Caco-2 (cell line): ENCODE measurements at regions of chr16 and their contacts with region 1.

Region 1: DNA sequence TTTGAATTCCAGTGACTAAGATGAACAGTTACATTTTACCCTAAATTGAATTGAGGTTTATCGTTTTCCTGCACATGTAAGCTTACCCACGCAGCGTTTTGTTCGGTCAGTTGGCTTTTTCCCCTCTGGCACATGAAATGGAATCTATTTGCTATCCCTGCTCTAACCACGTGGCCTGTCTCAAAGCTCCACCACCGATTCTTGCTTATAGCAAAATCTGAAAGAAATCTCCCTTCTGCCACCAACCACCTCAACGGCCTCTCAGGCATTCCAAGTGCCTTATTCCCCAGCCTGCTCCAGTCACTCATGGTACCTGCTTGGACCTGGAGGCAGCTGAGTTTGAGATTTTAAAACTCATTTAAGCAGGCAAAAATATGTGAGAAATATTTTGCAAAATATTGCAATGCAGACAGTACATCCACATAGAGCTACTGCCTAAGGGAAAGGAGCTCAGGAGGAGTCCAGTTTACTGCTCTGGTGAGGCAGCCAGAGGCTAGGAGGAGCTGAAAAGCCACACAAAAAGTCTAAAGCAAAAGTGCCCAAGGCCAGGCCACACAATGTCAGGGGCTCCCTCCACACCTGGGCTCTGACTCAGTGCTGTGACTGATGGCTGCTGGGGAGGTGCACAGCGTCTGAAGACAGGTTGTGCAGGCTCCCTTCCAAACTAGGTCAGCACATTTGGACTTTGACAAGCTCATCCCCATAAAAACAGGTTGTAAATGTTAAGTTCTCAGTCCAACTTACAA is 26.4 kb downstream of the ARHGAP17 start:
- DNase-seq: peak; percentile 87 to 91
- H3K4me3 ChIP-seq: no peak overlapping the region
- H3K4me3 Mint-ChIP-seq: peak overlapping the region; percentile 49
- H3K27ac Mint-ChIP-seq: peak overlapping the region; percentile 86
- H3K4me1 ChIP-seq: peaks cover 67% of the 10 kb centered on the region
- H3K4me1 Mint-ChIP-seq: peaks cover 51% of the 10 kb centered on the region
- H3K27me3 ChIP-seq: no peaks in the 10 kb centered on the region
- H3K27me3 Mint-ChIP-seq: no peaks in the 10 kb centered on the region
- CTCF ChIP-seq: no peak

Region 2: DNA sequence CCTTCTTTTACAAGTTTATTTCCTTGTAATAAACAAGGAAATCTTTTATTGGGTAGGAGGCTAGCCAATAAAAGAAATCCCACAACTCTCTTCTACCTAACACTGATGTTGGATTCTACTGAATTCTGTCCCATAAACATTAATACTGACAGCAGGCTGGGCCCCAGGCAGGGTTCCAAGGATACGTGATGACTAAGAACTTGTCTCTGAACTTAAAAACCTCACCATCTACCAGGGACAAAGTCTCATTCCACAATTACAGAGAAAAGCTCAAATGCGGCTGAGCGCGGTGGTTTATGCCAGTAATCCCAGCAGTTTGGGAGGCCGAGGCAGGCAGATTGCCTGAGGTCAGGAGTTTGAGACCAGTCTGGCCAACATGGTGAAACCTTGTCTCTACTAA is 38.5 kb before region 1 on chr16:
- CTCF ChIA-PET with region 1: no interaction called
- POLR2A ChIA-PET with region 1: no interaction called
- intact Hi-C with region 1: no loop called
- DNase-seq: no peak
- H3K4me3 ChIP-seq: no peak overlapping the region
- H3K4me3 Mint-ChIP-seq: no peak overlapping the region
- H3K27ac Mint-ChIP-seq: peak overlapping the region; percentile 8
- H3K4me1 ChIP-seq: peaks cover 12% of the 10 kb centered on the region
- H3K4me1 Mint-ChIP-seq: peaks cover 14% of the 10 kb centered on the region
- H3K27me3 ChIP-seq: no peaks in the 10 kb centered on the region
- H3K27me3 Mint-ChIP-seq: no peaks in the 10 kb centered on the region
- CTCF ChIP-seq: no peak

Region 3: DNA sequence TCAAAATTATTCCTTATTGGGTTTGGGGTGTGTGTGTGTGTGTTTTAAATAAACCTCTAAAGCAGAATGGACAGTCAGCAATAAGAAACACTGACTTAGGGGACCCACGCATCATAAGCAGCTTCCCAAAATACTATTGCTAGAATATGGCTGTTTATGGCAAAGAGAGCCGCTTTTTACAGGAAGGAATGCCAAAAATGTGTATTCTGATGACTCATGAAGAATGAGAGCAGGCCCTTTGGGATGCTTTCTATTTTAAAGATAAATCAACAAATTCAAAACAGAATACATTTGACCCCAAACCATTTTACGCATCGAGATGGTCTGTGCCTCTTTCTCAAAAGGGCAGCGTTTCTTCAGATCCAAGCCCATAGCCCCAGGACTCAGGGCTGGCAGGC is 11.1 kb before region 1 on chr16:
- CTCF ChIA-PET with region 1: interaction called, 3 read pairs
- POLR2A ChIA-PET with region 1: interaction called, 5 read pairs
- intact Hi-C with region 1: loop called (anchors 1 kb)
- DNase-seq: no peak
- H3K4me3 ChIP-seq: no peak overlapping the region
- H3K4me3 Mint-ChIP-seq: peak overlapping the region; percentile 24
- H3K27ac Mint-ChIP-seq: peak overlapping the region; percentile 66
- H3K4me1 ChIP-seq: peaks cover 35% of the 10 kb centered on the region
- H3K4me1 Mint-ChIP-seq: peaks cover 59% of the 10 kb centered on the region
- H3K27me3 ChIP-seq: no peaks in the 10 kb centered on the region
- H3K27me3 Mint-ChIP-seq: no peaks in the 10 kb centered on the region
- CTCF ChIP-seq: no peak

Region 4: GRCh38 chr16:25014500-25015147 is 25.9 kb after region 1 on chr16:
- CTCF ChIA-PET with region 1: interaction called, 6 read pairs
- POLR2A ChIA-PET with region 1: interaction called, 9 read pairs
- intact Hi-C with region 1: loop called (anchors 1 kb)
- DNase-seq: peak in 1 of 2 experiments; percentile 43
- H3K4me3 ChIP-seq: peak overlapping the region; percentile 96
- H3K4me3 Mint-ChIP-seq: peak overlapping the region; percentile 85
- H3K27ac Mint-ChIP-seq: peak overlapping the region; percentile 86
- H3K4me1 ChIP-seq: peaks cover 39% of the 10 kb centered on the region
- H3K4me1 Mint-ChIP-seq: peaks cover 37% of the 10 kb centered on the region
- H3K27me3 ChIP-seq: no peaks in the 10 kb centered on the region
- H3K27me3 Mint-ChIP-seq: no peaks in the 10 kb centered on the region
- CTCF ChIP-seq: no peak

Region 5: DNA sequence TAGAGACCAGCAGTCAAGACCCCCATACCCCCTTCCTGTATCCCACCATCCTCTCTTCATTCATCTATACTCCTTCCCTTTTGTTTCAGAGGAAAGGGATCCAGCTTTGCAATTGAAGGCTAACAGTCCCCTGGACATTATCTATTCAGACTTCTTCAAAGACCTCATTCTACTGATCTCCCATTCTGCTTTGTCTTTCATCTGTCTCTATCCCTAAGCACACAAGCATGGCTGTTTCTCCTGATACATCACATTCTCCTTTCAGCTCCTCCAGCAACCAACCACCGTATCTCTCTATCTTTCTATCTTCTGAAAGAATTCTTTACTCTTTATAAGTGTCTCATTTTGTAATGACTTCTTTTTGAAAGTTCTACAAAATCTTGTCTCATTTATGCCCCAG is 36.1 kb after region 1 on chr16:
- CTCF ChIA-PET with region 1: no interaction called
- POLR2A ChIA-PET with region 1: no interaction called
- intact Hi-C with region 1: loop called (anchors 2 kb)
- DNase-seq: peak; percentile 49 to 64
- H3K4me3 ChIP-seq: no peak overlapping the region
- H3K4me3 Mint-ChIP-seq: peak overlapping the region; percentile 23
- H3K27ac Mint-ChIP-seq: peak overlapping the region; percentile 69
- H3K4me1 ChIP-seq: peaks cover 25% of the 10 kb centered on the region
- H3K4me1 Mint-ChIP-seq: peaks cover 30% of the 10 kb centered on the region
- H3K27me3 ChIP-seq: no peaks in the 10 kb centered on the region
- H3K27me3 Mint-ChIP-seq: no peaks in the 10 kb centered on the region
- CTCF ChIP-seq: no peak